Lower lobe of right lung (tissue), 2 donors: ENCODE measurements at regions of chr13 and their contacts with region 1.

Region 1: DNA sequence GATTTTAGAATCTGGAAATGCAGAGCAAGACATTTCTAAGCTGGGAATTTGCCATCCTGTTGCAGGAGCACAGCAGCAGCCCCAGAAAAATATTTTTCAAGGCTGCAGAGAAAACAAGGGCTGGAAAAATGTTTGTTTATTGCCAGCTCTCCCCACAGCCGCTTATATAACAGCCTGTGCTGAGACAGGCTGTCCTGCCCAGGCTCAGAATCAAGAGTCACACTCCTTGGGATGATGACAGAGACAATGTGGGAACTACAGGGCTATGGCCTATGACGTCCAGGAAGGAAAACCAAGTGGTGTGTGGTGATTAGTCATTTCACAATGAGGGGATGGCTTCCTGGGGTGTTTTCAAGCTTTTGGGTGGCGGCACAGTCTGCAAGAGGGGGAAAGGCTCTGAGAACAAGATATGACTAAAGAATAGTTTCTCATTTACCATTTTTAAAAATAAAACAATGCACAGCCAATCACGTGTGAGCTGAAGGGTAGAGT is 136.3 kb upstream of the SERP2 start:
- DNase-seq: no peak
- ATAC-seq: peak; percentile 93 to 95
- H3K4me3 ChIP-seq: no peak overlapping the region
- H3K27ac ChIP-seq: peak overlapping the region; percentile 83
- H3K4me1 ChIP-seq: peaks cover 38% of the 10 kb centered on the region
- H3K27me3 ChIP-seq: no peaks in the 10 kb centered on the region
- CTCF ChIP-seq: no peak

Region 2: DNA sequence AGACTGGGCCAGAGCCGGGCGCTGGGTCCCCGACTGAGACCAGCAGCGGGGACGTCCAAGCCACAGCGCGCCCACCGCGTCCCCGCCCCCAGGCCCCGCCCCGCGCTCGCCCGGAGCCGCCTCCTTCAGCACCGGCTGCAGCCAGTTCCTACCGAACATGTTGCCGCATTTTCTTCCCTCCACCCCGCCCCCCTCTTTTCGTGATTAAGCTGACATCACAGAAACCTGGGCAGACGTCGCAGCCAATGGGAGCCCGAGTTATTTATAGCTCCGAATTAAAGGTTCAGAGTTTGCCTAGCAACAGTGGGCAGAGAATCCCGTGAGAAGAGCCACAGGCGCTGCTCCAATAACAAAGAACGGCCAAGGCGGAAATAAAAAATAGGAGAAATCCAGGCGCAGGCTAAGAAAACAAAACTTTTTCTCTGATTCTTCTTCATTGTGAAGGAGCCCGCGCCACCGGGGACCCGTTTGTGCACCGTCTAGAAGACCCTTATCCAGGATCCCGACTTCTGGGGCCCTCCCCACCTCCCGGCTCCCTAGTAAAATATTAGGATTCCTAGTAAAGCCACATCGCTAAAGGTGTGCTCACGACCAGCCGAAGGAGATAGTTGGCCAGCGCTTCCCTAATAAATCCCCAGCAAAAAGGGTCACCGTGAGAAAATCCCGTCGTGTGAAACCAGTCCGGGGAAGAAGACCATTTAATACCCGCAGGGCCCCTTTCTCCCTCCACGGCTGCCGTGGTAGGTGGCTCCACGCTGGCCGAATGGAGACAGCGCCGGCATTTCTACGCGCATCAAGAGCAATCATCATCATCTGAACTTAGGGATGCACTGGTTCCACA is 198.0 kb after region 1 on chr13:
- intact Hi-C with region 1: loop called (anchors 10 kb)
- DNase-seq: peak; percentile 95
- ATAC-seq: peak; percentile 78 to 91
- H3K4me3 ChIP-seq: peak overlapping the region; percentile 81
- H3K27ac ChIP-seq: peak overlapping the region; percentile 94
- H3K4me1 ChIP-seq: peaks cover 25% of the 10 kb centered on the region
- H3K27me3 ChIP-seq: no peaks in the 10 kb centered on the region
- CTCF ChIP-seq: no peak